ENCODE measurements at regions of chr15 and their contacts with region 1.

Region 1: DNA sequence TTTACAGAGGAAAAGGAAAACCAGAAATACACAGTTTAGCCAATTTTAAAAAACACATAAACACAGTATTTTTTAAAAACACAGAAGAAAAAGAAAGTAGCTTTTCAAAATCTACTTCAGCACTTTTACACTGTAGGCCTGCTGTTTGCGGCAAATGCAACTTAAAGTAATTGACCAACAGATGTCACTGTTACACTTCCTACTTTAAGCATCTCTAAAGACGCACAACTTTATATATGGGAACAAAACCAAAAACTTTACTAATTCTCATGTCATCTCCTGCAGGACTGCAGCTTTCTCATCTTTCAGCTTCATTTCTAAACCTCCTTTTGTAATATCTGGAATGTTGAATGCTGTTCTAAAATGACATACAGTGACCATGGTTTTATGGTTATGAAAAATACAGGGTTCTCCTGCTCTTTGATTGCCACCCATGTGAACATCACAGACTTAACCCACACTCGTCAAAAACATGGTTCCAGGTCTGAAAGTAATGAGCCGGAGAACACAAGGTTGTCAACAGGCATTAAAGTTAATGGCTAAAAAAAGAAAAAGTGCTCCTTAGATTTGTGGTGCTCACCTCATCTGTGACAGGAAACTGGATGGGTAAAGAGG is 107.9 kb downstream of the FMN1 start:
- DNase-seq: no peak
- H3K4me3 Mint-ChIP-seq: no peak overlapping the region
- H3K27ac Mint-ChIP-seq: no peak overlapping the region
- H3K4me1 Mint-ChIP-seq: no peaks in the 10 kb centered on the region
- H3K27me3 Mint-ChIP-seq: no peaks in the 10 kb centered on the region
- CTCF ChIP-seq: no peak

Region 2: GRCh38 chr15:33067941-33068481 is 18.6 kb before region 1 on chr15:
- CTCF ChIA-PET with region 1: no interaction called
- intact Hi-C with region 1: no loop called
- DNase-seq: peak; percentile 63
- H3K4me3 Mint-ChIP-seq: peak overlapping the region; percentile 86
- H3K27ac Mint-ChIP-seq: peak overlapping the region; percentile 96
- H3K4me1 Mint-ChIP-seq: peaks cover 27% of the 10 kb centered on the region
- H3K27me3 Mint-ChIP-seq: no peaks in the 10 kb centered on the region
- CTCF ChIP-seq: no peak

Region 3: GRCh38 chr15:33132722-33133345 is 46.2 kb after region 1 on chr15:
- CTCF ChIA-PET with region 1: interaction called, 6 read pairs
- intact Hi-C with region 1: loop called (anchors 1 kb)
- DNase-seq: peak; percentile 7
- H3K4me3 Mint-ChIP-seq: no peak overlapping the region
- H3K27ac Mint-ChIP-seq: no peak overlapping the region
- H3K4me1 Mint-ChIP-seq: no peaks in the 10 kb centered on the region
- H3K27me3 Mint-ChIP-seq: no peaks in the 10 kb centered on the region
- CTCF ChIP-seq: peak; percentile 22

Region 4: GRCh38 chr15:33154351-33155166 is 67.9 kb after region 1 on chr15:
- CTCF ChIA-PET with region 1: no interaction called
- intact Hi-C with region 1: no loop called
- DNase-seq: no peak
- H3K4me3 Mint-ChIP-seq: no peak overlapping the region
- H3K27ac Mint-ChIP-seq: no peak overlapping the region
- H3K4me1 Mint-ChIP-seq: no peaks in the 10 kb centered on the region
- H3K27me3 Mint-ChIP-seq: no peaks in the 10 kb centered on the region
- CTCF ChIP-seq: no peak

Region 5: DNA sequence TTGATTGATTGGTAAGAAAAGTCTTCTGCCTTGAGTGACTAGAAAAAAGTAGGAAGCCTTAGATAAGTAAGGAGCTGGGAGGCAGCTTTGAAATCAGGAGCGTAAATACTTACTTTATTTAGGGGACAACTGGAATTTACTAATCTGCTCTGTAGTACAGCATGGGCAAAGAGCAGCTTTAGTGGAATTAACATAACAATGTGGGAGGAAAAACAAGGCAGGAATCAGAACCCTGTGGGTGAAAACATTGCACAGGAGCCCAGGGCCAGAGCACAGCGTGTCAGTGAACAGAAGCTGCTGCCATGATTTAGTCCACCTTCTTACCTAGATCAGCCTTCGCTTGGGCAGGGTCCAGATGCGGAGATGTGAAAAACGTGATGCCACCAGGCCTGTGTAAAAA is 93.3 kb after region 1 on chr15:
- CTCF ChIA-PET with region 1: no interaction called
- intact Hi-C with region 1: no loop called
- DNase-seq: no peak
- H3K4me3 Mint-ChIP-seq: no peak overlapping the region
- H3K27ac Mint-ChIP-seq: no peak overlapping the region
- H3K4me1 Mint-ChIP-seq: no peaks in the 10 kb centered on the region
- H3K27me3 Mint-ChIP-seq: no peaks in the 10 kb centered on the region
- CTCF ChIP-seq: no peak

Region 6: GRCh38 chr15:33226559-33227181 is 140.1 kb after region 1 on chr15:
- CTCF ChIA-PET with region 1: no interaction called
- intact Hi-C with region 1: loop called (anchors 10 kb)
- DNase-seq: peak; percentile 3
- H3K4me3 Mint-ChIP-seq: no peak overlapping the region
- H3K27ac Mint-ChIP-seq: no peak overlapping the region
- H3K4me1 Mint-ChIP-seq: no peaks in the 10 kb centered on the region
- H3K27me3 Mint-ChIP-seq: no peaks in the 10 kb centered on the region
- CTCF ChIP-seq: peak; percentile 22

Measured in Calu3 (cell line).